Heart left ventricle (tissue), 16 donors: ENCODE measurements at regions of chr5 and their contacts with region 1.

Region 1: DNA sequence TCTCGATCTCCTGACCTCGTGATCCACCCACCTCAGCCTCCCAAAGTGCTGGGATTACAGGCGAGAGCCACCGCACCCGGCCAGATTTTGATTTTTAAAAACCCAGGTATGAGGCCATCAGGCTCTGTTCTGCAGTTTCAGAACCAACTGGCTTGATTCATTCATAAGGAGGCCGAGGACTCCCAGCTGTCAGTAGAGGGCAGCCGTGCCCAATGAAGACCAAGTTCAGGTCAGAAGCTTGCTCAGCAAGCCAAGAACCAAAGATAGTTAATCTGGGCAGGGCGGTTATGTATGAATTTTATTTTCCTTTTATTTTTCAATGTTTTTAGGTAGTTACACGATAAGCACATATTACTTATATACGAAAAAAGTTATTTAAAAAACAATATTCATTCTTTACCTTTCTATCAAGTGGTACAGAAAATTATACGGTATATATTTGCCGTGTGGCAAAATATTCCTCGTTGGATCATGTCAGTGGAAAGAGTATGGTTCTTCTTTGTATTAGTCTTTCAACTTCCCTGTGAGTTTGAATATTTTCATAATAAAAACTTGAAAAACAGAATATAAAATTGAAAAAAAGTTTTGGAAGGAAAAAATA is 18.0 kb downstream of the MGAT1 start:
- DNase-seq: peak; percentile 83 to 89 (median 84)
- ATAC-seq: peak; percentile 63 to 78 (median 74)
- H3K4me3 ChIP-seq: no peak overlapping the region
- H3K27ac ChIP-seq: peak overlapping the region in 7 of 12 donors; percentile 41 to 81 (median 73)
- H3K4me1 ChIP-seq: peaks cover 4 to 50% (median 37%) of the 10 kb centered on the region in 12 donors
- H3K27me3 ChIP-seq: no peaks in the 10 kb centered on the region
- CTCF ChIP-seq: peak; percentile 59 to 90 (median 78)
- POLR2A ChIP-seq: no peak

Region 2: DNA sequence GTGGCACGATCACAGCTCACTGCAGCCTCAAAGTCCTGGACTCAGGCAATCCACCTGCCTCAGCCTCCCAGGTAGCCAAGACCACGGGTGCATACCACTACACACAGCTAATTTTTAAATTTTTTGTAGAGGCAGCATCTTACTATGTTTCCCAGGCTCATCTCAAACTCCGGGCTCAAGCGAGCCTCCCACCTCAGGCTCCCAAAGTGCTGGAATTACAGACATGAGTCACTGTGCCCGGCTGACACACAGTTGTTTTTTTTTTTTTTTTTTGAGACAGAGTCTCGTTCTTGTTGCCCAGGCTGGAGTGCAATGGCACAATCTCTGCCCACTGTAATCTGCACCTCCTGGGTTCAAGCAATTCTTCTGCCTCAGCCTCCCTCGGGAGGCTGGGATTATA is 360.5 kb before region 1 on chr5:
- intact Hi-C with region 1: no loop called
- DNase-seq: no peak
- ATAC-seq: no peak
- H3K4me3 ChIP-seq: no peak overlapping the region
- H3K27ac ChIP-seq: no peak overlapping the region
- H3K4me1 ChIP-seq: no peaks in the 10 kb centered on the region
- H3K27me3 ChIP-seq: no peaks in the 10 kb centered on the region
- CTCF ChIP-seq: no peak
- POLR2A ChIP-seq: no peak

Region 3: DNA sequence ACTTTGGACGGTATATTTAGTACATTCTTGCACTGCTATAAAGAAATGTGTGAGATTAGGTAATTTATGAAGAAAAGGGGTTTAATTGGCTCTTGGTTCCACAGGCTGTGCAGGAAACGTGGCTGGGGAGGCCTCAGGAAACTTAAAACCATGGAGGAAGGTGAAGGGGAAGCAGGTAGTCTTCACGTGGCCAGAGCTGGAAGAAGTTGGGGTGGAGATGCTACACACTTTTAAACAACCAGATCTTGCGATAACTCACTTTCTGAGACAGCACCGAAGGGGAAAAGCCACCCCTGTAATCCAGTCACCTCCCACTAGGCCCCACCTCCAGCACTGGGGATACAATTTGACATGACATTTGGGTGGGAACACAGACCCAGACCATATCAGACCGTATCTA is 276.9 kb before region 1 on chr5:
- intact Hi-C with region 1: no loop called
- DNase-seq: no peak
- ATAC-seq: no peak
- H3K4me3 ChIP-seq: no peak overlapping the region
- H3K27ac ChIP-seq: no peak overlapping the region
- H3K4me1 ChIP-seq: no peaks in the 10 kb centered on the region
- H3K27me3 ChIP-seq: no peaks in the 10 kb centered on the region
- CTCF ChIP-seq: no peak
- POLR2A ChIP-seq: no peak

Region 4: DNA sequence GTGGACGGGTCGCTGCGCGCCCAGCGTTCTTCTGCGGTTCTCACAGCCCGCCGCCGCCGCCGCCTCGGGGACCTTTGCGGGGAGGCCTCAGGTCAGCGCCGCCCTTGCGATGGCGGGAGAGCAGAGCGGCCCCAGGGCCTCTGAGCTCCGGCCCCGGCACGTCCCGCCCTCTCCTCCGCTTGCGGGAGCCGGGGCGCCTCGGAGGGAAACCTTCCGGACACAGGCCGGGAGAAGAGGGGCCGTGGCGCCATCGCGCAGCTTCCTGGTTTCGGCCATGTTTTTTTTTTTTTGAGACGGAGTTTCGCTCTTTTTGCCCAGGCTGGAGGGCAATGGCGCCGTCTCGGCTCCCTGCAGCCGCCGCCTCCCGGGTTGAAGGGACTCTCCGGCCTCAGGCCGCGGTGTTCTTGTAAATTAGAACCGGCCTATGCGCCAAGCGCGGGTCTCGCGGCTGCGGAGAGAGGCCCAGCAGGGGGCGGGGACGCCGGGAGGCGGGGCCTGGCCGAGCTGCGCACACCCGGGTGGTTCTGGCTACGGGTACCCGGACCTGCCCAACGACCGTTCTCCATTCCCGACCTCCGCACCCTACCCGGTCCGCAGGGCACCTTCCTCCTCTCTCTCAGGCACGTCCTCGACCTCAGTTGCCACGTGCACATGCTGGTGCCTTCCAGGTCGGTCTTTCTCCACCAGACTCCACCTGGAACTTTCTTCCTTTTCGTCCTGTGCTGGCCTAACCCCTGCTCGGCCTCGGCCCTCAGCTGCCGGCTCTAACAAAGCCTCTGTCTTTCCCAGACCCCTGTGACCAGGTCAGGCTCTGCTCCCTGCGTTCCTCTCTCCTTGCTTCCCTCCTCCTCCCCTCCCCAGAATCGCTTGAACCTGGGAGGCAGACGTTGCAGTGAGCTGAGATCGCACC is 46.8 kb after region 1 on chr5:
- intact Hi-C with region 1: loop called in 1 of 10 experiments (anchors 5 kb)
- DNase-seq: peak; percentile 91 to 93 (median 93)
- ATAC-seq: peak; percentile 95 to 98 (median 98)
- H3K4me3 ChIP-seq: peak overlapping the region; percentile 67 to 100 (median 87)
- H3K27ac ChIP-seq: peak overlapping the region; percentile 94 to 100 (median 98)
- H3K4me1 ChIP-seq: peaks cover 0 to 56% (median 27%) of the 10 kb centered on the region in 12 donors
- H3K27me3 ChIP-seq: no peaks in the 10 kb centered on the region
- CTCF ChIP-seq: peak in 7 of 12 donors; percentile 13 to 49 (median 36)
- POLR2A ChIP-seq: peak; percentile 45 to 74

Region 5: GRCh38 chr5:180848878-180849277 is 64.3 kb after region 1 on chr5:
- intact Hi-C with region 1: no loop called
- DNase-seq: no peak
- ATAC-seq: no peak
- H3K4me3 ChIP-seq: no peak overlapping the region
- H3K27ac ChIP-seq: no peak overlapping the region
- H3K4me1 ChIP-seq: peaks cover 0 to 12% (median 3%) of the 10 kb centered on the region in 12 donors
- H3K27me3 ChIP-seq: no peaks in the 10 kb centered on the region
- CTCF ChIP-seq: peak in 1 of 12 donors; percentile 6
- POLR2A ChIP-seq: no peak

Region 6: DNA sequence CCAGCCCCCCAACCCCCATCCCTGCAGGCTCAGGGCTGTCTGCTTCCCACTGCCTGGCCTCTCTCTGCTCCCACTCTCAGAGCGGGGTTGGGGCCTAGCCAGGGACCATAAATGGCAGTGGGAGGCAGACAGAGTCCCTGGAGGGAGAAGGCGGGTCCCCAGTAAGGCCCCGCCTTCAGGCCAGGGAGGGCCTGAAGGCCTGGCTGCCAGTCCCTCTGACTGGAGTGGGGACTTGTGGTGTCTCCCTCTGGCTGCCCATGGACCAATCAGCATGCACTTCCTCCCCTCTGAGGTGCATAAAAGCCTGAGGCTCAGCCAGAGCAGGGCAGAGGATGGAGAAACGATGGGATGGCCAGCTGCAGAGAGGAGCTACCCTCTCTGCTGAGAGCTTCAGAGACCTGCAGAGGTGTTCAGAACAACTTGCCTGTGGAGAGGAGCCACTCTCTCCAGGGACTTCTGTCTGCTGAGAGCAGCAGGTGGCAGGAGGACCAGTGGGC is 252.8 kb after region 1 on chr5:
- intact Hi-C with region 1: loop called in 4 of 10 experiments (anchors 10 kb)
- DNase-seq: peak in 1 of 5 donors; percentile 50
- ATAC-seq: peak; percentile 59 to 82 (median 72)
- H3K4me3 ChIP-seq: no peak overlapping the region
- H3K27ac ChIP-seq: peak overlapping the region in 3 of 12 donors; percentile 3 to 38 (median 22)
- H3K4me1 ChIP-seq: peaks cover 0 to 13% (median 1%) of the 10 kb centered on the region in 12 donors
- H3K27me3 ChIP-seq: peaks cover 0 to 11% (median 0%) of the 10 kb centered on the region in 9 donors
- CTCF ChIP-seq: no peak
- POLR2A ChIP-seq: peak in 1 of 2 donors; percentile 93

Region 7: GRCh38 chr5:181052672-181053487 is 268.3 kb after region 1 on chr5:
- intact Hi-C with region 1: loop called in 4 of 10 experiments (anchors 10 kb)
- DNase-seq: peak in 2 of 5 donors; percentile 49 to 65
- ATAC-seq: peak in 3 of 4 donors; percentile 36 to 55 (median 47)
- H3K4me3 ChIP-seq: peak overlapping the region; percentile 34 to 72 (median 60)
- H3K27ac ChIP-seq: peak overlapping the region; percentile 57 to 94 (median 88)
- H3K4me1 ChIP-seq: peaks cover 0 to 42% (median 18%) of the 10 kb centered on the region in 12 donors
- H3K27me3 ChIP-seq: peaks cover 20 to 88% (median 66%) of the 10 kb centered on the region in 9 donors
- CTCF ChIP-seq: no peak
- POLR2A ChIP-seq: no peak

Region 8: GRCh38 chr5:181181650-181182565 is 397.3 kb after region 1 on chr5:
- intact Hi-C with region 1: loop called in 2 of 10 experiments (anchors 5 to 10 kb)
- DNase-seq: peak; percentile 68 to 79 (median 71)
- ATAC-seq: peak; percentile 72 to 87 (median 86)
- H3K4me3 ChIP-seq: no peak overlapping the region
- H3K27ac ChIP-seq: no peak overlapping the region
- H3K4me1 ChIP-seq: peaks cover 0 to 24% (median 5%) of the 10 kb centered on the region in 12 donors
- H3K27me3 ChIP-seq: peaks cover 0 to 3% (median 0%) of the 10 kb centered on the region in 9 donors
- CTCF ChIP-seq: peak; percentile 67 to 86 (median 80)
- POLR2A ChIP-seq: no peak